Heart right ventricle (tissue), 16 donors: ENCODE measurements at regions of chr10 and their contacts with region 1.

Region 1: DNA sequence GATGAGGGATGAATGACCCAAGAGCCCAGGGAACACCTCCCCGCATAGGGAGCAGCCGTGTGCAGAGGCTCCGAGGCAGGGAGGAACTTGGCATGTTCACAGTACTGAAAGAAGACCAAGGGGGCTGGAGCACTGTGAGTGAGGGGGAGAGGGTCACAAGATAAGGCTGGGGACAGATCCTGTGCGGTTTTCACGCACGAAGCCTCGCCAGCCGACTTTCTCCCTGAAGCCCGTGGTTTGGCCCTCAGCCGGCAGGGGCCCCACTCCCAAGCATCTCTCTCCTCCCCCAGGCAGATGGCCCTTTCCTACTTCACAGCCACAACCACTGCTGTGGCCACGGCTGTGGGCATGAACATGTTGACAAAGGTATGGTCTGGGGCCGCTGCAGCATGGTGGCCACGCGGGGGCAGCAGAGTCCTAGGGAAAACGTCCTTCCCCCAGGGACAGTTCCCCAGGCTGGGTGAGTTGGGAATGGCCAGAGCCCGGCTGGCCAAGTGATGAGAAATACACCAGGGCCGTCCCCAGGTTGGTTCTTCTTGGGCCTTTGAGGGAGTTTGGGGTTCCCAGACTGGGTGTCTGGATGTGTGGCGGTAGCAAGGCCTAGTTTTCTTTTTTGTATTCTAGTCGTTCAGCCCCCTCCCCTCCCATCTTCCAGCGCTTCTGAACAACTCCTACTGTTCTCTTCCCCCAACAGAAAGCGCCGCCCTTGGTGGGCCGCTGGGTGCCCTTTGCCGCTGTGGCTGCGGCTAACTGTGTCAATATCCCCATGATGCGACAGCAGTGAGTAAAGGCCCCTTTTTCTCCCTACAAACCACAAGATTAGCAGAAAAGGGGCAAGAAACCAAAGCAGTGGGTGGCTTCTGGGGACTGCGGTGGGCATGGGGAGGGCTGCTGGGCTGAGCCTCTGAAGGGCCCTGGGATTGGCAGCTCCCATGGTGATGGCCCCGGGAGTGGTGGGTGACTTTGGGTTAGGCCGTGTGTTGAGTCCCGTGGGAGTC is 14.4 kb upstream of the WBP1L start:
- DNase-seq: peak; percentile 89 to 91
- ATAC-seq: peak; percentile 91 to 97 (median 95)
- H3K4me3 ChIP-seq: no peak overlapping the region
- H3K27ac ChIP-seq: peak overlapping the region in 1 of 10 donors; percentile 6
- H3K4me1 ChIP-seq: peaks cover 0 to 29% (median 6%) of the 10 kb centered on the region in 9 donors
- H3K27me3 ChIP-seq: no peaks in the 10 kb centered on the region
- CTCF ChIP-seq: peak; percentile 82 to 99 (median 96)

Region 2: DNA sequence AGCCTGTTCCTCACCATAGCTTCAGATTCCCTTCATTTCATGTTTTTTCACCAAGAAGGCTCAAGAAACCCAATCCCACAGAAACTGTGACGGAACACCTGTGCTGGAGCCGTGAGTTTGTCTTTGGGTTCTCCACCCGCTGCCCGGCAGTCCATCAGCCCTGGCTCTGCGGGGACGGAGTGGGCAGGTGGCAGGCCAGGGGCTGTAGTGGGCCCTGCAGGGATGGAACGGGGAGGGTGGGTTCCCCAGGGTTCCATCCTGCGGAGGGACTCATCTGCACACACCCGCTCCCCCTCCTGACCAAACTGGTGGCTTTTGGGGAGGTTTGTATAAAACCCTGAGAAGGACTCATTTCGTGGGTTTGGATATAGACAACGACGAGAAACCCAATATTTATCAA is 92.9 kb after region 1 on chr10:
- intact Hi-C with region 1: loop called in 2 of 10 experiments (anchors 5 to 10 kb)
- DNase-seq: no peak
- ATAC-seq: no peak
- H3K4me3 ChIP-seq: no peak overlapping the region
- H3K27ac ChIP-seq: no peak overlapping the region
- H3K4me1 ChIP-seq: peaks cover 0 to 28% (median 5%) of the 10 kb centered on the region in 9 donors
- H3K27me3 ChIP-seq: no peaks in the 10 kb centered on the region
- CTCF ChIP-seq: no peak

Region 3: DNA sequence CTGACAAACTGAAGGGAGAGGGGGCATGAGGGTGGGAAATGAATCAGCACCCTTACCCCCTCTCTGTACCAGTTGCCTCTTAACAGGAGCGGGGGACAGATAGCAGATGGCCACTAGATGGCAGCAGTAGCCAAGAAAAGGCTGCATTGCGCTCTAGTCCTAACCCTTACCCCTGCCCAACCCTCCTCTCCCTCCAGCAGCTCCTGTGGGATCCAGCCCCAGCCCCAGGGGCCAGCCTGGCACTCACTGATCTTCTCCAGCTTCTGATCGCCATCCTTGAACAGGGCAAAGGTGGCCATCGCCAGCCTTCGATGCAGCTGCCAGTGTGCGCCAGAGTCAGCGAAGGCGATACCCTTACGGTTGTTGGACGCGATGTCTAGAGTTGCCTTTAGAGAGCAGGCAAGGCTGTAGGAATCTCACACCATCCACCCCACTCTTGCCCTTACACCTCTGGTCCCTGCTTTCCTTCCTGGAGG is 105.7 kb after region 1 on chr10:
- intact Hi-C with region 1: loop called in 8 of 10 experiments (anchors 5 to 10 kb)
- DNase-seq: peak; percentile 57 to 80
- ATAC-seq: peak; percentile 90 to 96 (median 94)
- H3K4me3 ChIP-seq: no peak overlapping the region
- H3K27ac ChIP-seq: no peak overlapping the region
- H3K4me1 ChIP-seq: peaks cover 0 to 8% (median 5%) of the 10 kb centered on the region in 9 donors
- H3K27me3 ChIP-seq: no peaks in the 10 kb centered on the region
- CTCF ChIP-seq: peak; percentile 77 to 92 (median 90)

Region 4: GRCh38 chr10:102904346-102904745 is 175.0 kb after region 1 on chr10:
- intact Hi-C with region 1: loop called in 9 of 10 experiments (anchors 1 to 5 kb)
- DNase-seq: no peak
- ATAC-seq: no peak
- H3K4me3 ChIP-seq: no peak overlapping the region
- H3K27ac ChIP-seq: no peak overlapping the region
- H3K4me1 ChIP-seq: peaks cover 0 to 3% (median 0%) of the 10 kb centered on the region in 9 donors
- H3K27me3 ChIP-seq: no peaks in the 10 kb centered on the region
- CTCF ChIP-seq: no peak

Region 5: GRCh38 chr10:103069453-103070331 is 340.4 kb after region 1 on chr10:
- intact Hi-C with region 1: loop called in 9 of 10 experiments (anchors 5 to 10 kb)
- DNase-seq: peak; percentile 48 to 49
- ATAC-seq: peak; percentile 58 to 84 (median 80)
- H3K4me3 ChIP-seq: no peak overlapping the region
- H3K27ac ChIP-seq: no peak overlapping the region
- H3K4me1 ChIP-seq: peaks cover 0 to 19% (median 3%) of the 10 kb centered on the region in 9 donors
- H3K27me3 ChIP-seq: no peaks in the 10 kb centered on the region
- CTCF ChIP-seq: peak; percentile 38 to 76 (median 67)

Region 6: GRCh38 chr10:103254538-103255325 is 525.4 kb after region 1 on chr10:
- intact Hi-C with region 1: loop called in 3 of 10 experiments (anchors 5 to 10 kb)
- DNase-seq: no peak
- ATAC-seq: no peak
- H3K4me3 ChIP-seq: no peak overlapping the region
- H3K27ac ChIP-seq: no peak overlapping the region
- H3K4me1 ChIP-seq: no peaks in the 10 kb centered on the region
- H3K27me3 ChIP-seq: no peaks in the 10 kb centered on the region
- CTCF ChIP-seq: no peak